A549 (cell line): ENCODE measurements at regions of chr17 and their contacts with region 1.

Region 1: DNA sequence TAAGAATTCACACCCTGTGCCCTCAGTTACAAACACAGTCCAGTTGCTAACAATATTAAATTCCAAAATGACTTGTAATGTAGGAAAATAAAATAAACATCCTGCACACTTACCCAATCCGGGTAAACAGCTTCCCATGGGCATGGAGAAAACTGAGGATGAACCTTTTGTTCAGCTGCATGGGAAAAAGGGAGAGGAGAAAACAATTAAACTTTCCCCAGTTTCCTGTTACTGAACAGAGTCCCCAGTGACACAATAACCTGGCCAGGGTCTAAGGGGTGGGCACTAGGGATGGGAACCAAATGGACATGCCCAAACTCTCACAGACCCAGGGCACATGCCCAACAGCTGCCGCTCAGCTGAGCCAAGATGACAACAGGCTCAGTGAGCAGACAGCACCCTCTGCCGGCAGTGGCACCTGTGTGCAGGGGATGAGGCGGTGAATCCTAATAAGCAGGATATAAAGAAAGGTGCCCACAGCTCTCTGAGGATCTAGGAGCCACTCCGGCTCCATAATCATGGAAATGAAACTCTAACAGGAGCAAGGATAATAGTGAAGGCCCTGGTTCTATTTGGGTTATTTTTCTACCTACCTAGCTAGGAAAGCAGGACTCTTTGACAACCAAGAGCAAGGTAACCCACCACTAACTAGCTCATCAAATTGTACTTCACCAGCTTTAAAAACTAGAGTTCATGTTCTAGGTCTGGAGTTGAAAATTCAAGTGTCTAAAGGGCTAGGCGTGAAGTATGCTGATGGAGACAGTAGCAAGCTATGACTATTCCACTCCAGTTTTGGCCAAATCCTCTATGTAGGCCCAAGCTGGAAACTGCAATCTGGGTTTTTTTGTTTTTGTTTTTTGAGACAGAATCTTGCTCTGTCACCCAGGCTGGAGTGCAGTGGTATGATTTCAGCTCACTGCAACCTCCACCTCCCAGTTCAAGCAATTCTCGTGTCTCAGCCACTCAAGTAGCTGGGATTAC is 58.8 kb downstream of the SMG6 start:
- DNase-seq: peak; percentile 84 to 94
- ATAC-seq: peak; percentile 98 to 99
- H3K4me3 ChIP-seq: no peak overlapping the region
- H3K27ac ChIP-seq: no peak overlapping the region
- H3K4me1 ChIP-seq: peaks cover 16% of the 10 kb centered on the region
- CTCF ChIP-seq: peak; percentile 99
- EP300 ChIP-seq: no peak; a peak in 1 of 5 replicates
- POLR2A ChIP-seq: no peak
- RAD21 ChIP-seq: peak; percentile 98 to 99

Region 2: GRCh38 chr17:2029911-2030778 is 214.7 kb before region 1 on chr17 and contains the start of gene DPH1:
- CTCF ChIA-PET with region 1: interaction called, 20 read pairs
- POLR2A ChIA-PET with region 1: no interaction called
- DNase-seq: peak; percentile 91 to 99
- ATAC-seq: peak; percentile 83 to 93
- H3K4me3 ChIP-seq: peak within 1 kb of the TSS; percentile 80
- H3K27ac ChIP-seq: peak within 1 kb of the TSS; percentile 71 to 90
- H3K4me1 ChIP-seq: peaks cover 19% of the 10 kb centered on the region
- CTCF ChIP-seq: no peak
- EP300 ChIP-seq: no peak
- POLR2A ChIP-seq: peak; percentile 64
- RAD21 ChIP-seq: peak in 1 of 2 experiments; percentile 9; a peak in 3 of 5 replicates
- polyA plus RNA-seq, gene DPH1: 25.5 and 33.0 TPM in 2 replicates

Region 3: GRCh38 chr17:2075336-2076086 is 169.3 kb before region 1 on chr17:
- CTCF ChIA-PET with region 1: interaction called, 105 read pairs
- POLR2A ChIA-PET with region 1: no interaction called
- DNase-seq: no peak
- ATAC-seq: peak; percentile 27 to 46; a peak in 5 of 6 replicates
- H3K4me3 ChIP-seq: no peak overlapping the region
- H3K27ac ChIP-seq: no peak overlapping the region
- H3K4me1 ChIP-seq: peaks cover 3% of the 10 kb centered on the region; the same call in 1 of the 3 replicates
- CTCF ChIP-seq: no peak
- EP300 ChIP-seq: no peak
- POLR2A ChIP-seq: no peak
- RAD21 ChIP-seq: no peak

Region 4: DNA sequence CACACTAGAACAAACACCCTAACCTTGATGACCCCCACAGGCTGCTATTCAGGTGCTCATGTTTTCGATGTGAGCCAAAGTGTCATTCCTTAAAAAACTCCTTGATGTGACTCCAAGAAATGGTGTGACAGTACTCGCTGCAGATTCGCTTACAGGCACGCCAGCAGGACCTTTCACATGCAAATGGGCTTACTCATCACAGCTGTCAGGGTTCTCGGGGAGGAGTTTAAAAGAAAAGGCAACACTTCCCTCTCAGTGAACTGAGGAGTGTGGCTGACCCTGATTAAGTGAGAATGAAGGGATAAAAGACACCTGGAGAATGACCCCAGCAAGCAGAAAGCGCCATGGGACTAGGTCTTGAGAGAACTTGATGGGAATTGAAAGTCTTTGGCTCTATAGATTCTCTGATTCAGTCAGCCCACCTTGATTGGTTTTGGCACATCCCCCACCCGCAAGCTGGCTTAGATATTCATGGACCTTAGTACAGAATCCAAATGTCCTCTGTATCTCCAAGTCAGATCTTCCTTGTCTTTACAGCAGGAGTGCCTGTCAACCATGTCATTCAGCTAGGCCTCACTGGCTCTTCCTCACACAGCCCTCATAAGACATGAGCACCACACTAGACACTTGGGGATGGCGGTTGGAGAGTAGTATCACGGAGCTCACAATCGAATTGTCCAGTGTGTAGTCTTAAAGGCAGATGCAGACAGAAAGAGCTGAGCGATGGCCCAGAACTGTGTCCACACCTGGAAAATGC is 107.3 kb before region 1 on chr17:
- CTCF ChIA-PET with region 1: interaction called, 9 read pairs
- POLR2A ChIA-PET with region 1: interaction called, 12 read pairs
- DNase-seq: no peak
- ATAC-seq: peak; percentile 19 to 27; a peak in 3 of 6 replicates
- H3K4me3 ChIP-seq: no peak overlapping the region
- H3K27ac ChIP-seq: no peak overlapping the region
- H3K4me1 ChIP-seq: peaks cover 8% of the 10 kb centered on the region; the same call in 2 of the 3 replicates
- CTCF ChIP-seq: no peak
- EP300 ChIP-seq: no peak
- POLR2A ChIP-seq: no peak
- RAD21 ChIP-seq: no peak

Region 5: GRCh38 chr17:2195729-2196128 is 49.1 kb before region 1 on chr17:
- CTCF ChIA-PET with region 1: interaction called, 28 read pairs
- POLR2A ChIA-PET with region 1: no interaction called
- DNase-seq: no peak
- ATAC-seq: no peak
- H3K4me3 ChIP-seq: no peak overlapping the region
- H3K27ac ChIP-seq: no peak overlapping the region
- H3K4me1 ChIP-seq: peaks cover 25% of the 10 kb centered on the region
- CTCF ChIP-seq: no peak
- EP300 ChIP-seq: no peak
- POLR2A ChIP-seq: no peak
- RAD21 ChIP-seq: no peak

Region 6: DNA sequence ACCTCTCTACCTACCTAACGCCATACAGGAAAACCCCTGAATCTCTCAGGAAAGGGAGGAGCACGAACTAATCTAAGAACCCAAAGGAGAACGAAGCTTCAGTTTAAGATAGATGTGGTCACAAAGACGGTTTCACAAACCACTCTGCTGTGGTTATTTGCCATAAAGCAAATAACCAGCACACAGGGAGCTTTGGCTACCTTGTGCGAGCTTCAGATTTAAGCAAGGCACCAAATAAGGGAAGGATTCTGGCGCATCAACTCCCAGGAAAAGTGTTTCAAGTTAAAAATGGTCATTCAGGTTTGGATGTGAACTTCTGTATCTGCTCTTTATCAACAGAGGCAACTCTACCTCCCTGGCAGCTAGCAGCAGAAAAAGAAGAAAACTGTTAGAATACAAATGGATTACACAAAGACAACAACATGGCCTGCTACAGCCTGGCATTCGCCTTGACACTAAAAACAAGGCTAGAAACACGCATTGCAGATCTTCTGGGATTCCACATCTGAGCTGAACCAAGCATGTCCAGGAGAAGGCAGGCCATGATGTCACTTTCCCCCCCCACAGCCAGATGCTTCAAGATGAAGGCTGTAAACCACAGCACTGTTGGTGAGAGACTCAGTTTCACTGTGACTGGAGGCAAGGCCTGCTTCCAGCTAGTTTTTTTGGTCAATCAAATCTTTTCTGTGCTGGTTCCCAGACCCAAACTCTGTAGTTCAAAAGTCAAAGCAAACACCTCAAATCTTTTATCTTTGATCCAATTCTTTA is 15.1 kb after region 1 on chr17:
- CTCF ChIA-PET with region 1: interaction called, 200 read pairs
- POLR2A ChIA-PET with region 1: no interaction called
- DNase-seq: no peak
- ATAC-seq: no peak
- H3K4me3 ChIP-seq: no peak overlapping the region
- H3K27ac ChIP-seq: no peak overlapping the region
- H3K4me1 ChIP-seq: peaks cover 22% of the 10 kb centered on the region
- CTCF ChIP-seq: no peak
- EP300 ChIP-seq: no peak
- POLR2A ChIP-seq: no peak
- RAD21 ChIP-seq: no peak

Region 7: GRCh38 chr17:2312736-2313135 is 67.9 kb after region 1 on chr17:
- CTCF ChIA-PET with region 1: no interaction called
- POLR2A ChIA-PET with region 1: no interaction called
- DNase-seq: no peak
- ATAC-seq: no peak
- H3K4me3 ChIP-seq: no peak overlapping the region
- H3K27ac ChIP-seq: no peak overlapping the region
- H3K4me1 ChIP-seq: no peaks in the 10 kb centered on the region
- CTCF ChIP-seq: no peak
- EP300 ChIP-seq: no peak
- POLR2A ChIP-seq: no peak
- RAD21 ChIP-seq: no peak